Transverse colon (tissue), 4 donors: ENCODE measurements at regions of chr3 and their contacts with region 1.

Region 1: GRCh38 chr3:22887664-22888291 is 315.3 kb upstream of the UBE2E2 start:
- DNase-seq: peak; percentile 19
- H3K4me3 ChIP-seq: no peak overlapping the region
- H3K27ac ChIP-seq: no peak overlapping the region
- H3K4me1 ChIP-seq: peaks cover 0 to 10% (median 0%) of the 10 kb centered on the region in 4 donors
- H3K27me3 ChIP-seq: no peaks in the 10 kb centered on the region
- CTCF ChIP-seq: peak; percentile 42 to 52 (median 51)
- EP300 ChIP-seq: no peak
- POLR2A ChIP-seq: no peak

Region 2: DNA sequence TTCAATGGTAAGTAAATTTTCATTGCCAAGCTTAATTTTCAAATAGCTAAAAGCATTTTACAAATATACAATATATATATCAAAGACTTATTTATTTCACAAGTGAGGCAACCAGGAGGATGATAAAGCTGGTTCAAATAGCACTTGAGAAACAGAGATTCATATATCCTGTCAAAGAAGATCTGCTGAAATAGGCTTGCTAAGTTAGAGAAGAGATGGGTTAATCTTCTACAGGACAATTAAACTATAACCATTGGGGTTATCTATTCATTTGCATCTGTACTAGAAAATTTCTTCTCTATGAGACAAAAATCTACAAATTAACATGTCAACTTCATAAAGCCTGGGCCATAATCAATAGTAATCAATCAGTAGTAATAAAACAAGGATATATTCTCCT is 322.4 kb before region 1 on chr3:
- in situ Hi-C with region 1: loop called in 2 of 4 experiments (anchors 10 to 25 kb)
- intact Hi-C with region 1: no loop called
- DNase-seq: no peak
- H3K4me3 ChIP-seq: no peak overlapping the region
- H3K27ac ChIP-seq: no peak overlapping the region
- H3K4me1 ChIP-seq: no peaks in the 10 kb centered on the region
- H3K27me3 ChIP-seq: no peaks in the 10 kb centered on the region
- CTCF ChIP-seq: no peak
- EP300 ChIP-seq: no peak
- POLR2A ChIP-seq: no peak